GM12878 (cell line): ENCODE measurements at regions of chr5 and their contacts with region 1.

Region 1: DNA sequence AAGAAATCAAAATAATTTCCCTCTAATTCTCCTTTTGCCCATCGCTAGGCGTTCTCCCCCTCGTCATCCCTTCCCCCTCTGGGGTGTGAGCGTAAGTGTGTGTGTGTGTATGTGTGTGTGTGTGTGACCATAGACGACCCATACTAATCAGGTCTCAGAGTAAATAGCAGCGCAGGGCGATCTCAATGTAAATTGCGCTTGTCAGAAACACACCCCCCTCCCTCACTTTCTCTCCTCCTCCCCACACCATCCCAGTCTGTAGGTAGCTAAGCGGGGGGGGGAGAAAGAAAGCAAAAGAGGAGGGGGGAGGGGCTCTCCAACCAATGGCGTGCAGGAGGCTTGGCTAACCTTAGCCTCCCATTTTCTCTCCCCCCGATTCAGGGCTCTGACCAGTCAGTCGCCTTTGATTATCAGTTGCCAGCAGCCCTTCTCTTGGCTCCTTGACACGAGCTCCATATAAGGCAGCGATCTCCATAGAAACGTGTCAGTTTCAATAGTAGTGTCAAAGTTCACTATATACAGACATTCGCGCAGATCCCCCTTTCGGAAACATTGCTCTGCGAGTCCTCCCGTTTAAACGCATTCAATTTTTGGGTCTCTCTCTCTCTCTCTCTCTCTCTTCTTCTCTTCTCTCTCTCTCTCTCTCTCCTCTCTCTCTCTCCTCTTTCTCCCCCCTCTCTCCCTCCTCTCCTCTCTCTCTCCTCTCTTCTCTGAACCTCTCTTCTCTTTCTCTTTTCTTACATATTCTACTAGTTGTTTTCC is at the start of gene NR2F1:
- DNase-seq: no peak
- ATAC-seq: peak; percentile 54
- H3K4me3 ChIP-seq: peak within 1 kb of the TSS; percentile 16; the same call in 1 of the 2 replicates
- H3K27ac ChIP-seq: no peak within 1 kb of the TSS
- H3K4me1 ChIP-seq: peaks cover 18% of the 10 kb centered on the region
- H3K27me3 ChIP-seq: peaks cover 14 to 45% of the 10 kb centered on the region in 2 experiments
- CTCF ChIP-seq: no peak
- EP300 ChIP-seq: no peak
- POLR2A ChIP-seq: no peak
- RAD21 ChIP-seq: no peak
- polyA plus RNA-seq, gene NR2F1: 0.04 TPM in 1 of 2 experiments, not detected in the other

Region 2: GRCh38 chr5:93620487-93621326 is 37.8 kb after region 1 on chr5:
- CTCF ChIA-PET with region 1: no interaction called
- POLR2A ChIA-PET with region 1: no interaction called
- RAD21 ChIA-PET with region 1: interaction called, 4 read pairs
- SMC1A ChIA-PET with region 1: interaction called, 3 read pairs
- in situ Hi-C with region 1: no loop called
- intact Hi-C with region 1: loop called (anchors 1 kb)
- DNase-seq: no peak
- ATAC-seq: peak; percentile 99
- H3K4me3 ChIP-seq: peak overlapping the region; percentile 86
- H3K27ac ChIP-seq: no peak overlapping the region
- H3K4me1 ChIP-seq: peaks cover 3% of the 10 kb centered on the region; the same call in 1 of the 2 replicates
- H3K27me3 ChIP-seq: no peaks in the 10 kb centered on the region
- CTCF ChIP-seq: peak in 2 of 3 experiments; percentile 11 to 34; a peak in 2 of 6 replicates
- EP300 ChIP-seq: no peak
- POLR2A ChIP-seq: no peak
- RAD21 ChIP-seq: peak; percentile 17; the same call in 1 of the 2 replicates

Region 3: GRCh38 chr5:93909356-93909755 is 326.5 kb after region 1 on chr5:
- CTCF ChIA-PET with region 1: interaction called, 4 read pairs
- POLR2A ChIA-PET with region 1: no interaction called
- RAD21 ChIA-PET with region 1: no interaction called
- SMC1A ChIA-PET with region 1: no interaction called
- in situ Hi-C with region 1: loop called (anchors 5 kb)
- intact Hi-C with region 1: loop called (anchors 2 kb)
- DNase-seq: no peak
- ATAC-seq: no peak
- H3K4me3 ChIP-seq: no peak overlapping the region
- H3K27ac ChIP-seq: no peak overlapping the region
- H3K4me1 ChIP-seq: no peaks in the 10 kb centered on the region
- H3K27me3 ChIP-seq: no peaks in the 10 kb centered on the region
- CTCF ChIP-seq: 0 out of 6 replicates have a peak, but pooled peaks of 2 of the 3 experiments have one; percentile 3 to 8
- EP300 ChIP-seq: no peak
- POLR2A ChIP-seq: no peak
- RAD21 ChIP-seq: 0 out of 2 replicates have a peak, but pooled peaks have one; percentile 6

Region 4: DNA sequence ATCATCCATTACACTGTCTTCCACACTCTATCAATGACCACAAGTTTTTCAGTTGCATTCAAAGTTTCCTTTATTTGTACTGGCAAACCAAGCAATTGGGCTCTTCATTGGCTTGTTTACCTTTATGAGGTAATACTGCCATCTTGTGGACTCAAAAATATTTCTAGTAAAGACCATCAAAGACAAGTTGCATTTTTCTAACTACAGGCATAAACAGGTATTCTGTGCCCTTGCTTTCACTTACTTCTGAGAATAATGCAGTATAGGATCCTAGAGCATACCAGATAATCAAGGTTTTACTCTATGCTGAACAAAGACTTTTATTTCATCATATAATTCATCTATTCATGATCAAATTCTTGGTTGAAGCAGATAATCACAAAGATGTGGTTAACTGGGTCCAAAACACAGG is 332.3 kb after region 1 on chr5:
- CTCF ChIA-PET with region 1: interaction called, 5 read pairs
- POLR2A ChIA-PET with region 1: no interaction called
- RAD21 ChIA-PET with region 1: interaction called, 4 read pairs
- SMC1A ChIA-PET with region 1: interaction called, 3 read pairs
- in situ Hi-C with region 1: loop called (anchors 5 kb)
- intact Hi-C with region 1: loop called (anchors 2 kb)
- DNase-seq: peak; percentile 5
- ATAC-seq: peak; percentile 71
- H3K4me3 ChIP-seq: no peak overlapping the region
- H3K27ac ChIP-seq: no peak overlapping the region
- H3K4me1 ChIP-seq: no peaks in the 10 kb centered on the region
- H3K27me3 ChIP-seq: no peaks in the 10 kb centered on the region
- CTCF ChIP-seq: peak; percentile 35 to 49 (median 48)
- EP300 ChIP-seq: no peak
- POLR2A ChIP-seq: no peak
- RAD21 ChIP-seq: peak; percentile 64

Region 5: GRCh38 chr5:94693043-94693822 is 1110.4 kb after region 1 on chr5:
- CTCF ChIA-PET with region 1: no interaction called
- POLR2A ChIA-PET with region 1: no interaction called
- RAD21 ChIA-PET with region 1: interaction called, 4 read pairs
- SMC1A ChIA-PET with region 1: no interaction called
- in situ Hi-C with region 1: loop called (anchors 25 kb)
- intact Hi-C with region 1: no loop called
- DNase-seq: no peak
- ATAC-seq: peak; percentile 86
- H3K4me3 ChIP-seq: no peak overlapping the region
- H3K27ac ChIP-seq: no peak overlapping the region
- H3K4me1 ChIP-seq: no peaks in the 10 kb centered on the region
- H3K27me3 ChIP-seq: no peaks in the 10 kb centered on the region
- CTCF ChIP-seq: peak in 2 of 3 experiments; percentile 36 to 63; a peak in 3 of 6 replicates
- EP300 ChIP-seq: no peak
- POLR2A ChIP-seq: no peak
- RAD21 ChIP-seq: peak; percentile 62